A549 (cell line): ENCODE measurements at regions of chr5 and their contacts with region 1.

Region 1: GRCh38 chr5:142669477-142669876 is 16.4 kb downstream of the FGF1 start:
- DNase-seq: no peak
- ATAC-seq: no peak
- H3K4me3 ChIP-seq: no peak overlapping the region
- H3K27ac ChIP-seq: no peak overlapping the region
- H3K4me1 ChIP-seq: peaks cover 4% of the 10 kb centered on the region; the same call in 1 of the 3 replicates
- CTCF ChIP-seq: no peak
- EP300 ChIP-seq: no peak
- POLR2A ChIP-seq: no peak
- RAD21 ChIP-seq: no peak

Region 2: GRCh38 chr5:142529626-142530278 is 139.7 kb before region 1 on chr5:
- CTCF ChIA-PET with region 1: no interaction called
- POLR2A ChIA-PET with region 1: no interaction called
- DNase-seq: peak in 1 of 2 experiments; percentile 50
- ATAC-seq: peak; percentile 70 to 75; a peak in 4 of 6 replicates
- H3K4me3 ChIP-seq: no peak overlapping the region
- H3K27ac ChIP-seq: peak overlapping the region in 1 of 2 experiments; percentile 41; a peak in 2 of 6 replicates
- H3K4me1 ChIP-seq: peaks cover 14% of the 10 kb centered on the region; the same call in 2 of the 3 replicates
- CTCF ChIP-seq: no peak
- EP300 ChIP-seq: no peak
- POLR2A ChIP-seq: no peak
- RAD21 ChIP-seq: no peak

Region 3: GRCh38 chr5:142685418-142686209 is 16.1 kb after region 1 on chr5 and contains the start of gene FGF1:
- CTCF ChIA-PET with region 1: interaction called, 583 read pairs
- POLR2A ChIA-PET with region 1: no interaction called
- DNase-seq: no peak
- ATAC-seq: peak in 1 of 2 experiments; percentile 35; a peak in 3 of 6 replicates
- H3K4me3 ChIP-seq: no peak within 1 kb of the TSS
- H3K27ac ChIP-seq: no peak within 1 kb of the TSS
- H3K4me1 ChIP-seq: peaks cover 11% of the 10 kb centered on the region
- CTCF ChIP-seq: no peak
- EP300 ChIP-seq: no peak
- POLR2A ChIP-seq: no peak
- RAD21 ChIP-seq: no peak
- polyA plus RNA-seq, gene FGF1: 0.05 and 0.15 TPM in 2 replicates

Region 4: DNA sequence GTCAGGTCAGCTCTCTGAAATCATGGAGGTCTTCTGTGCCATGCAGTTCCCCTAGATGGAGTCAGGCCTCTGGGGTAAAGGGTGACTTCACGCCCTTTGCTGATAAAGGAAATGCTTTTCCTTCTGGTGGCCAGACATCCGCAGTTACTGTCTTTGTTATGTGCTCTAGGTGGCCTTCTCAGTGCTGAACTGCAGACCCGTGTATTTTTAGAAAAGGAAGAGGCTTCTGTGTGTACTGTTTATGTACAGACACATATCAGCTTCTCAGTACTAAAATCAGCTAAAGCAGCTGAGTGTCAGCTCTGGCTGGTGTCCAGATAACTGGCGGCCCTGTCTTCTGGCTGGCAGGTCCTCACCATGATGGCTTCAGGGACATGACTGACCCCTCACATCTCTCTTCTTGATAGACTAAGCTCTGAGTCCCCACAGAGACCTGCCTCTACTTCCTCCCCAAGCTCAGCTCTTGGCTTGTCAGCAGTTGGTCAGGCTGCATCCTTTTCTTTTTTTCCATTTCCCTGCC is 176.0 kb after region 1 on chr5:
- CTCF ChIA-PET with region 1: no interaction called
- POLR2A ChIA-PET with region 1: no interaction called
- DNase-seq: no peak
- ATAC-seq: peak in 1 of 2 experiments; percentile 33; a peak in 3 of 6 replicates
- H3K4me3 ChIP-seq: no peak overlapping the region
- H3K27ac ChIP-seq: peak overlapping the region in 1 of 2 experiments; percentile 57; a peak in 3 of 6 replicates
- H3K4me1 ChIP-seq: peaks cover 26% of the 10 kb centered on the region
- CTCF ChIP-seq: no peak
- EP300 ChIP-seq: no peak
- POLR2A ChIP-seq: no peak
- RAD21 ChIP-seq: no peak